ENCODE measurements at regions of chr1 and their contacts with region 1.

Region 1: GRCh38 chr1:145845514-145846161 is at the start of gene NUDT17:
- DNase-seq: no peak
- ATAC-seq: peak; percentile 89
- H3K4me3 ChIP-seq: peak within 1 kb of the TSS; percentile 54 to 65
- H3K27ac ChIP-seq: peak within 1 kb of the TSS; percentile 81
- H3K4me1 ChIP-seq: 0 out of 2 replicates have a peak, but pooled peaks cover 4% of the 10 kb centered on the region
- H3K27me3 ChIP-seq: no peaks in the 10 kb centered on the region
- CTCF ChIP-seq: peak; percentile 99
- total RNA-seq, gene NUDT17: 3.7 TPM

Region 2: GRCh38 chr1:145936247-145936646 is 90.6 kb after region 1 on chr1:
- CTCF ChIA-PET with region 1: no interaction called
- POLR2A ChIA-PET with region 1: no interaction called
- in situ Hi-C with region 1: no loop called
- intact Hi-C with region 1: no loop called
- DNase-seq: no peak
- ATAC-seq: 0 out of 2 replicates have a peak, but pooled peaks have one; percentile 26
- H3K4me3 ChIP-seq: no peak overlapping the region
- H3K27ac ChIP-seq: no peak overlapping the region
- H3K4me1 ChIP-seq: no peaks in the 10 kb centered on the region
- H3K27me3 ChIP-seq: no peaks in the 10 kb centered on the region
- CTCF ChIP-seq: no peak

Region 3: DNA sequence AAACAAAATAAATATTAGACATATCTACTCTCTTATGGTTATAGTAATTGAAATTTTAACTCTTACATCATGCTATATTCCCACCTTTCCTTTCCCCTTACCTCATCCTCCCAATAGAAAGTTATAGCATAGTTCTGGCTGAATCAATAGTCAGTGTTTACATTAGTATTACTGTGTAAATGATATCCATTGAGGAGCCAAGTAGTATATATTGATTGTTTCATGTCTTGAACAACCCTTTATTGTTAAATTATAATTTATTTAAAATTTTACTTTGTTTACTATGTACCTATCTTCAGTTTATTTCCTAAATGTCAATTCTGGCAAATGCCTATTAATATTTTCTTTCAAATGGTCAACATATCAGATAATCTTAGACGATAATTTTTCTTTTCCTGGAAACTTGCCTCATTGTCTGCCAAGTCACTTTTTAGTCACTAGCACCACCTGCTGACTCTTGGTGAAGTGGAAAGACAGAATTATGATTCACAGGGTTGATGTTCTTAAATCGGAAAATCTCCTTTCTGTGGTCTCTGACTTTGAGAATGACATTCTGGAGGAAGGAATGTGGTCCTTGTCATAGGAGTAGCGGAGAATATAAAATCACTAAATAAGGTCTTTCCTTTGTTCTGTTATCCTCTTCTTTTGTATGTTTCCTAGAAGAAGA is 167.2 kb after region 1 on chr1:
- CTCF ChIA-PET with region 1: interaction called, 24 read pairs
- POLR2A ChIA-PET with region 1: no interaction called
- in situ Hi-C with region 1: no loop called
- intact Hi-C with region 1: loop called (anchors 5 kb)
- DNase-seq: peak; percentile 74
- ATAC-seq: peak; percentile 74; the same call in 1 of the 2 replicates
- H3K4me3 ChIP-seq: no peak overlapping the region
- H3K27ac ChIP-seq: no peak overlapping the region
- H3K4me1 ChIP-seq: no peaks in the 10 kb centered on the region
- H3K27me3 ChIP-seq: peaks cover 2% of the 10 kb centered on the region; the same call in 1 of the 2 replicates
- CTCF ChIP-seq: peak; percentile 78; the same call in 1 of the 2 replicates

Measured in Panc1 (cell line).